ENCODE measurements at regions of chr16 and their contacts with region 1.

Region 1: DNA sequence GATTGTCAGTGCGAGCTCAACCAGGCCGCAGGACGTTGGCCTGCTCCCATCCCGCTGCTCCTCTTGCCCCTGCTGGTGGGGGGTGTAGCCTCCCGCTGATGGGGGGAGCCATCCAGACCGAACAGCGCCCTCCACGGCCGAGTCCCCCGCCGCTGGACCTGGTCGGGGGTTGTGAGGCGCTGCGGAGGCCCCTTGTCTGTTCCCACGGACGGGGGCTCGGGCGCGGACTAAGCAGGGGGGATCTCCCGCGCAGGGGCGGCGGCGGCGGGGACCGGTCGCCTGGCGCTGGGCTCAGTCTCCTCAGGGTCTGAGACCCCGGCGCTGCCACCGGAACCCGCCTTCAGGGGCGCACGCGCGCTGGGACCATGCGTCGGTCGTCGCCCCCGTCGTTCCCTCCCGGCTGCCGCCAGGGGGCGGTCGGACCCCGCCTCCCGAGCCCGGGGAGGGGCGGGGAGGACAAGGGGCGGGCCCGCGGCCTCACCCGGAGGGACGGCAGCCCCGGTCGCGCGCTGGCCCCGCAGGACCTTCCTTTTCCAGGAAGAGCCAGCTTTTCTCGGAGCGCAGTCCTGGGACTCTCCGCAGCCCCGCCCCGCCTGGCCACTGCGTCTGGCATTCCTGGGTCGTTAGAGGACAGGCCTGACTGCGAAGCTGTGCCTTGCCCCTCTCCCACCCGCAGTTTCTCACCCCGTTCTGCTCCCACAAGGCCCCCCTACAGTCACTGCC is 6.3 kb upstream of the IL32 start:
- DNase-seq: peak; percentile 76 to 90 (median 85)
- H3K4me3 ChIP-seq: peak overlapping the region; percentile 23 to 89
- H3K4me3 Mint-ChIP-seq: peak overlapping the region; percentile 90 to 95 (median 94)
- H3K27ac ChIP-seq: peak overlapping the region; percentile 89
- H3K27ac Mint-ChIP-seq: peak overlapping the region; percentile 89 to 95 (median 92)
- H3K4me1 ChIP-seq: peaks cover 79% of the 10 kb centered on the region
- H3K4me1 Mint-ChIP-seq: peaks cover 36 to 74% (median 58%) of the 10 kb centered on the region in 4 donors
- H3K27me3 ChIP-seq: no peaks in the 10 kb centered on the region
- H3K27me3 Mint-ChIP-seq: no peaks in the 10 kb centered on the region

Region 2: GRCh38 chr16:3023669-3024478 is 35.3 kb before region 1 on chr16 and contains the starts of genes HCFC1R1 and THOC6:
- CTCF ChIA-PET with region 1: interaction called, 44 read pairs
- POLR2A ChIA-PET with region 1: interaction called, 37 read pairs
- intact Hi-C with region 1: no loop called
- DNase-seq: peak; percentile 95 to 97 (median 95)
- H3K4me3 ChIP-seq: peak within 1 kb of the TSS; percentile 38 to 85
- H3K4me3 Mint-ChIP-seq: peak within 1 kb of the TSS; percentile 87 to 97 (median 93)
- H3K27ac ChIP-seq: peak within 1 kb of the TSS; percentile 90
- H3K27ac Mint-ChIP-seq: peak within 1 kb of the TSS; percentile 97 to 99 (median 99)
- H3K4me1 ChIP-seq: peaks cover 56% of the 10 kb centered on the region
- H3K4me1 Mint-ChIP-seq: peaks cover 22 to 67% (median 45%) of the 10 kb centered on the region in 4 donors
- H3K27me3 ChIP-seq: peaks cover 2% of the 10 kb centered on the region
- H3K27me3 Mint-ChIP-seq: no peaks in the 10 kb centered on the region
- total RNA-seq, gene HCFC1R1: 16.0 to 18.0 TPM
- total RNA-seq, gene THOC6: 18.4 to 22.5 TPM

Region 3: DNA sequence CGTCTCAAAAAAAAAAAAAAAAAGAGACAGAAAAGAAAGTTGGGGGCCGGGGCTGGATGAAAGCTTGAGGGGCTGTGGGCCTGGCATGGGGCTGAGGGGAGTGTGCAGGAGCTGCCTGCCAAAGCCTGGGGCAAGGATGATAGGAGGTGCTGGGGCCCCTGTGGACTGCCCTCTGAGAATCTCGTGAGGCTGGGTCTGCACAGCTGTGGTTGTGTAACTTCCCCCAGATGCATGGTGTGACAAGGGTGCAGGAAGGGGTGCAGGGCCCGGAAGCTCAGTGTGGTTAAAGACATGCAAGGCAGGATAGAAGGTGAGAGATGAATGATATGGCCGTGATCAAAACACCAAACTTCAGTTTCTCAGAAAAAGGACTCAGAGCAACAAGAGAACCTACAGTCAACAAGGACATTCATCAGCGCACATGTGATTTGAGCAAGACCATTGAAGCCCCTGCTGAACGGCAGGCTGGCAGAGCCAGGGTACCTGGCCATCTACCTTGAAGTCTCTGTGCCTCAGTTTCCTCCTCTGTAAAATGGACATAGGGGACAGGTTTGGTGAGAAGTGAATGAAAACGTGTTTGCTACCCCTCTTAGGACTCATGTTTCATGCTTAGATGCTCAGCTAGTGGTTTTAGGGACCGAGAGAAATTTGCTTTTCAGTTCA is 15.8 kb after region 1 on chr16:
- CTCF ChIA-PET with region 1: interaction called, 57 read pairs
- POLR2A ChIA-PET with region 1: interaction called, 217 read pairs
- intact Hi-C with region 1: loop called (anchors 2 kb)
- DNase-seq: peak; percentile 90 to 96 (median 91)
- H3K4me3 ChIP-seq: peak overlapping the region; percentile 4 to 29
- H3K4me3 Mint-ChIP-seq: peak overlapping the region; percentile 74 to 87 (median 83)
- H3K27ac ChIP-seq: peak overlapping the region; percentile 77
- H3K27ac Mint-ChIP-seq: peak overlapping the region; percentile 91 to 99 (median 97)
- H3K4me1 ChIP-seq: peaks cover 98% of the 10 kb centered on the region
- H3K4me1 Mint-ChIP-seq: peaks cover 69 to 98% (median 85%) of the 10 kb centered on the region in 4 donors
- H3K27me3 ChIP-seq: no peaks in the 10 kb centered on the region
- H3K27me3 Mint-ChIP-seq: no peaks in the 10 kb centered on the region

Region 4: GRCh38 chr16:3094289-3095027 is 35.3 kb after region 1 on chr16:
- CTCF ChIA-PET with region 1: interaction called, 249 read pairs
- POLR2A ChIA-PET with region 1: interaction called, 36 read pairs
- intact Hi-C with region 1: loop called (anchors 1 kb)
- DNase-seq: peak; percentile 58 to 76 (median 66)
- H3K4me3 ChIP-seq: no peak overlapping the region
- H3K4me3 Mint-ChIP-seq: peak overlapping the region in 5 of 8 donors; percentile 3 to 77 (median 22)
- H3K27ac ChIP-seq: no peak overlapping the region
- H3K27ac Mint-ChIP-seq: peak overlapping the region; percentile 17 to 95 (median 78)
- H3K4me1 ChIP-seq: peaks cover 45% of the 10 kb centered on the region
- H3K4me1 Mint-ChIP-seq: peaks cover 9 to 56% (median 32%) of the 10 kb centered on the region in 4 donors
- H3K27me3 ChIP-seq: no peaks in the 10 kb centered on the region
- H3K27me3 Mint-ChIP-seq: no peaks in the 10 kb centered on the region

Region 5: GRCh38 chr16:3123986-3124886 is 65.1 kb after region 1 on chr16:
- CTCF ChIA-PET with region 1: interaction called, 362 read pairs
- POLR2A ChIA-PET with region 1: interaction called, 129 read pairs
- intact Hi-C with region 1: loop called (anchors 1 kb)
- DNase-seq: peak; percentile 96 to 97 (median 96)
- H3K4me3 ChIP-seq: peak overlapping the region; percentile 85 to 97
- H3K4me3 Mint-ChIP-seq: peak overlapping the region; percentile 94 to 98 (median 96)
- H3K27ac ChIP-seq: peak overlapping the region; percentile 50
- H3K27ac Mint-ChIP-seq: peak overlapping the region; percentile 95 to 99 (median 97)
- H3K4me1 ChIP-seq: peaks cover 40% of the 10 kb centered on the region
- H3K4me1 Mint-ChIP-seq: peaks cover 18 to 52% (median 32%) of the 10 kb centered on the region in 4 donors
- H3K27me3 ChIP-seq: no peaks in the 10 kb centered on the region
- H3K27me3 Mint-ChIP-seq: no peaks in the 10 kb centered on the region

Region 6: GRCh38 chr16:3150346-3151218 is 91.4 kb after region 1 on chr16:
- CTCF ChIA-PET with region 1: interaction called, 13 read pairs
- POLR2A ChIA-PET with region 1: interaction called, 11 read pairs
- intact Hi-C with region 1: no loop called
- DNase-seq: peak; percentile 96 to 99 (median 97)
- H3K4me3 ChIP-seq: peak overlapping the region; percentile 77 to 92
- H3K4me3 Mint-ChIP-seq: peak overlapping the region; percentile 87 to 96 (median 91)
- H3K27ac ChIP-seq: peak overlapping the region; percentile 64
- H3K27ac Mint-ChIP-seq: peak overlapping the region; percentile 87 to 100 (median 95)
- H3K4me1 ChIP-seq: peaks cover 27% of the 10 kb centered on the region
- H3K4me1 Mint-ChIP-seq: peaks cover 22 to 47% (median 26%) of the 10 kb centered on the region in 4 donors
- H3K27me3 ChIP-seq: no peaks in the 10 kb centered on the region
- H3K27me3 Mint-ChIP-seq: peaks cover 3 to 8% of the 10 kb centered on the region in 2 donors

Region 7: GRCh38 chr16:3173892-3174617 is 114.9 kb after region 1 on chr16:
- CTCF ChIA-PET with region 1: interaction called, 21 read pairs
- POLR2A ChIA-PET with region 1: no interaction called
- intact Hi-C with region 1: no loop called
- DNase-seq: no peak
- H3K4me3 ChIP-seq: no peak overlapping the region
- H3K4me3 Mint-ChIP-seq: peak overlapping the region in 7 of 8 donors; percentile 4 to 58 (median 35)
- H3K27ac ChIP-seq: no peak overlapping the region
- H3K27ac Mint-ChIP-seq: peak overlapping the region in 2 of 7 donors; percentile 17 to 75
- H3K4me1 ChIP-seq: peaks cover 48% of the 10 kb centered on the region
- H3K4me1 Mint-ChIP-seq: peaks cover 18 to 46% (median 35%) of the 10 kb centered on the region in 4 donors
- H3K27me3 ChIP-seq: peaks cover 38% of the 10 kb centered on the region
- H3K27me3 Mint-ChIP-seq: peaks cover 39 to 41% of the 10 kb centered on the region in 2 donors

Measured in CD4-positive, alpha-beta memory T cell (primary cell).